ENCODE measurements at regions of chr22 and their contacts with region 1.

Region 1: GRCh38 chr22:37862570-37863325 is 13.5 kb downstream of the EIF3L start:
- DNase-seq: no peak
- H3K4me3 ChIP-seq: no peak overlapping the region
- H3K27ac ChIP-seq: 0 out of 2 replicates have a peak overlapping the region, but pooled peaks have one; percentile 22
- H3K4me1 ChIP-seq: no peaks in the 10 kb centered on the region
- H3K27me3 ChIP-seq: no peaks in the 10 kb centered on the region
- CTCF ChIP-seq: no peak
- EP300 ChIP-seq: no peak
- POLR2A ChIP-seq: no peak; a peak in 1 of 3 replicates
- RAD21 ChIP-seq: no peak

Region 2: GRCh38 chr22:37775786-37776638 is 86.7 kb before region 1 on chr22:
- CTCF ChIA-PET with region 1: no interaction called
- POLR2A ChIA-PET with region 1: no interaction called
- DNase-seq: no peak
- H3K4me3 ChIP-seq: no peak overlapping the region
- H3K27ac ChIP-seq: no peak overlapping the region
- H3K4me1 ChIP-seq: peaks cover 0 to 2% (median 0%) of the 10 kb centered on the region in 4 experiments; a peak in 1 of 7 replicates
- H3K27me3 ChIP-seq: peaks cover 0 to 5% (median 2%) of the 10 kb centered on the region in 4 experiments; a peak in 2 of 7 replicates
- CTCF ChIP-seq: no peak
- EP300 ChIP-seq: no peak
- POLR2A ChIP-seq: no peak
- RAD21 ChIP-seq: no peak

Region 3: GRCh38 chr22:37807410-37808293 is 55.1 kb before region 1 on chr22 and contains the start of gene GCAT:
- CTCF ChIA-PET with region 1: interaction called, 11 read pairs
- POLR2A ChIA-PET with region 1: interaction called, 4 read pairs
- DNase-seq: peak; percentile 92 to 95
- H3K4me3 ChIP-seq: peak within 1 kb of the TSS; percentile 79 to 91 (median 86)
- H3K27ac ChIP-seq: no peak within 1 kb of the TSS
- H3K4me1 ChIP-seq: peaks cover 0 to 22% (median 16%) of the 10 kb centered on the region in 4 experiments; a peak in 5 of 7 replicates
- H3K27me3 ChIP-seq: peaks cover 3 to 40% (median 35%) of the 10 kb centered on the region in 4 experiments
- CTCF ChIP-seq: no peak
- EP300 ChIP-seq: no peak
- POLR2A ChIP-seq: peak; percentile 25 to 78
- RAD21 ChIP-seq: no peak
- total RNA-seq, gene GCAT: 24.3 and 24.5 TPM in 2 replicates

Region 4: DNA sequence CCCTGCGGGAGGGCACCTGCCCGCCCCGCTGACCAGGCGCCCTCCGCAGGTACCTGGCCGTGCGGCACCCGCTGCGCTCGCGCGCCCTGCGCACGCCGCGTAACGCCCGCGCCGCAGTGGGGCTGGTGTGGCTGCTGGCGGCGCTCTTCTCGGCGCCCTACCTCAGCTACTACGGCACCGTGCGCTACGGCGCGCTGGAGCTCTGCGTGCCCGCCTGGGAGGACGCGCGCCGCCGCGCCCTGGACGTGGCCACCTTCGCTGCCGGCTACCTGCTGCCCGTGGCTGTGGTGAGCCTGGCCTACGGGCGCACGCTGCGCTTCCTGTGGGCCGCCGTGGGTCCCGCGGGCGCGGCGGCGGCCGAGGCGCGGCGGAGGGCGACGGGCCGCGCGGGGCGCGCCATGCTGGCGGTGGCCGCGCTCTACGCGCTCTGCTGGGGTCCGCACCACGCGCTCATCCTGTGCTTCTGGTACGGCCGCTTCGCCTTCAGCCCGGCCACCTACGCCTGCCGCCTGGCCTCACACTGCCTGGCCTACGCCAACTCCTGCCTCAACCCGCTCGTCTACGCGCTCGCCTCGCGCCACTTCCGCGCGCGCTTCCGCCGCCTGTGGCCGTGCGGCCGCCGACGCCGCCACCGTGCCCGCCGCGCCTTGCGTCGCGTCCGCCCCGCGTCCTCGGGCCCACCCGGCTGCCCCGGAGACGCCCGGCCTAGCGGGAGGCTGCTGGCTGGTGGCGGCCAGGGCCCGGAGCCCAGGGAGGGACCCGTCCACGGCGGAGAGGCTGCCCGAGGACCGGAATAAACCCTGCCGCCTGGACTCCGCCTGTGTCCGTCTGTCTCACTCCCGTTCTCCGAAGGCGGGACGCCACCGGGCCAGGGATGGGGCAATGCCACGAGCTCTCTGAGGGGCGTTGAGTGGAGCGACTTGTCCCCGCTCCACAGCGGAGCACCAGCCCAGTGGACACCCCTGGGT is 37.8 kb before region 1 on chr22:
- CTCF ChIA-PET with region 1: interaction called, 80 read pairs
- POLR2A ChIA-PET with region 1: interaction called, 42 read pairs
- DNase-seq: peak in 1 of 2 experiments; percentile 72
- H3K4me3 ChIP-seq: peak overlapping the region; percentile 24 to 57 (median 44)
- H3K27ac ChIP-seq: no peak overlapping the region
- H3K4me1 ChIP-seq: peaks cover 5 to 25% (median 15%) of the 10 kb centered on the region in 4 experiments
- H3K27me3 ChIP-seq: peaks cover 8 to 30% (median 25%) of the 10 kb centered on the region in 4 experiments
- CTCF ChIP-seq: peak; percentile 55 to 78 (median 58)
- EP300 ChIP-seq: no peak
- POLR2A ChIP-seq: peak in 1 of 2 experiments; percentile 40; a peak in 1 of 3 replicates
- RAD21 ChIP-seq: peak in 1 of 2 experiments; percentile 26; a peak in 1 of 4 replicates

Region 5: DNA sequence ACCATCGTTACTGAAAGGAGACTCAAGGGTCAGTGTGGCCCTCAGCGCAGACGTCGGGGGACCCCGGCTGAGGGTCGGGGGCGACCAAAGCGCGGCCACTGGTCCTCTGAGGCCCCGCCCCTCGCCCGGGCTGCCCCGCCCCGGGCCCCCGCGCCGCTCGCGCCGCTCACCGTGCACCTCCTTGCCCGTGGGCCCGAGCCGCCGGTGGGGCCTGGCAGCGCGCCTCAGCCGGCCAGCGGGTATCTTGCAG is 19.1 kb before region 1 on chr22:
- CTCF ChIA-PET with region 1: interaction called, 15 read pairs
- POLR2A ChIA-PET with region 1: interaction called, 4 read pairs
- DNase-seq: no peak
- H3K4me3 ChIP-seq: peak overlapping the region; percentile 61 to 82 (median 67)
- H3K27ac ChIP-seq: 0 out of 2 replicates have a peak overlapping the region, but pooled peaks have one; percentile 47
- H3K4me1 ChIP-seq: peaks cover 0 to 2% (median 1%) of the 10 kb centered on the region in 4 experiments; a peak in 2 of 7 replicates
- H3K27me3 ChIP-seq: no peaks in the 10 kb centered on the region
- CTCF ChIP-seq: no peak
- EP300 ChIP-seq: no peak
- POLR2A ChIP-seq: no peak
- RAD21 ChIP-seq: no peak

Region 6: DNA sequence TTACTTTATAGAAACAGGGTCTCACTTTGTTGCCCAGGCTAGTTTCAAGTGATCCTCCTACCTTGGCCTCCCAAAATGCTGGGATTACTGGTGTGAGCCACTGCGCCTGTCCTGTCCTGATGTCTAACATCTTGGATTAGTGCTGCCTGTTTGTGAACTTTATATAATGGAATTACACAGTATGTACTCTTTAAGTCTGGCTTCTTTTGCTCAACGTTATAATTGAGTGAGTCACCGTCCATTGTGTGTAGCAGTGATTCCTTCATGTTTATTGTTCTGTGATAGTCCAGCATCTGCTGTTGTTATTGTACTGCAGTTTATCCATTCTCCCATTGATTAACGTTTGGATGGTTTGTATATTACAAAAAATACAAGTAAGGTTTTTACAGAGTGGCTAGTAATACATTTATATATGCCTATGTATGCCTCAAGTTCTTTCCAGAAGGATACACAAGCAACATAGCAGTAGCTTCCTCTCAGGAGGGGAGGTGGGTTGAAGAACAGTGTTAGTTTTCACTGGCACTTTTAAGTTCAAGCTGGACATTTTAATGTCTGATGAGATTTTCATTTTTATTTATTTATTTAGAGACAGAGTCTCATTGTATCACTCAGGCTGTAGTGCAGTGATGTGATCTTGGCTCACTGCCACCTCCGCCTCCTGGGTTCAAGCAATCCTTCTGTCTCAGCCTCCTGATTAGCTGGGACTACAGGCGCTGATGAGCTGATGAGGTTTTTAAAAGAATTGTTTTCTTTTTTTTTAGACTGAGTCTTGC is 18.1 kb after region 1 on chr22:
- CTCF ChIA-PET with region 1: interaction called, 33 read pairs
- POLR2A ChIA-PET with region 1: interaction called, 86 read pairs
- DNase-seq: no peak
- H3K4me3 ChIP-seq: no peak overlapping the region
- H3K27ac ChIP-seq: no peak overlapping the region
- H3K4me1 ChIP-seq: no peaks in the 10 kb centered on the region
- H3K27me3 ChIP-seq: no peaks in the 10 kb centered on the region
- CTCF ChIP-seq: no peak
- EP300 ChIP-seq: no peak
- POLR2A ChIP-seq: no peak
- RAD21 ChIP-seq: no peak

Region 7: GRCh38 chr22:37982938-37983859 is 120.5 kb after region 1 on chr22:
- CTCF ChIA-PET with region 1: no interaction called
- POLR2A ChIA-PET with region 1: no interaction called
- DNase-seq: peak in 1 of 2 experiments; percentile 96
- H3K4me3 ChIP-seq: peak overlapping the region; percentile 24 to 55 (median 40)
- H3K27ac ChIP-seq: no peak overlapping the region
- H3K4me1 ChIP-seq: peaks cover 0 to 30% (median 14%) of the 10 kb centered on the region in 4 experiments; a peak in 6 of 7 replicates
- H3K27me3 ChIP-seq: peaks cover 0 to 19% (median 12%) of the 10 kb centered on the region in 4 experiments; a peak in 5 of 7 replicates
- CTCF ChIP-seq: peak; percentile 76 to 81 (median 79)
- EP300 ChIP-seq: no peak
- POLR2A ChIP-seq: no peak
- RAD21 ChIP-seq: peak; percentile 39 to 58; a peak in 3 of 4 replicates